HCT116 (cell line): ENCODE measurements at regions of chr12 and their contacts with region 1.

Region 1: GRCh38 chr12:49503674-49504180 is 35.1 kb upstream of the KCNH3 start:
- DNase-seq: peak; percentile 98
- ATAC-seq: peak; percentile 66
- H3K4me3 ChIP-seq: peak overlapping the region in 1 of 2 experiments; percentile 46; a peak in 2 of 4 replicates
- H3K27ac ChIP-seq: peak overlapping the region; percentile 95
- H3K4me1 ChIP-seq: peaks cover 73 to 79% of the 10 kb centered on the region in 2 experiments
- H3K27me3 ChIP-seq: no peaks in the 10 kb centered on the region
- CTCF ChIP-seq: no peak
- POLR2A ChIP-seq: no peak
- RAD21 ChIP-seq: peak; percentile 21; the same call in 1 of the 2 replicates

Region 2: GRCh38 chr12:49366652-49367380 is 136.9 kb before region 1 on chr12:
- CTCF ChIA-PET with region 1: interaction called, 4 read pairs
- POLR2A ChIA-PET with region 1: interaction called, 16 read pairs
- RAD21 ChIA-PET with region 1: no interaction called
- intact Hi-C with region 1: no loop called
- DNase-seq: peak; percentile 80
- ATAC-seq: peak; percentile 85
- H3K4me3 ChIP-seq: peak overlapping the region; percentile 65 to 71
- H3K27ac ChIP-seq: peak overlapping the region; percentile 99
- H3K4me1 ChIP-seq: peaks cover 38 to 52% of the 10 kb centered on the region in 2 experiments
- H3K27me3 ChIP-seq: no peaks in the 10 kb centered on the region
- CTCF ChIP-seq: 0 out of 6 replicates have a peak, but pooled peaks of 2 of the 3 experiments have one; percentile 11 to 12
- POLR2A ChIP-seq: peak; percentile 71
- RAD21 ChIP-seq: 0 out of 2 replicates have a peak, but pooled peaks have one; percentile 1

Region 3: DNA sequence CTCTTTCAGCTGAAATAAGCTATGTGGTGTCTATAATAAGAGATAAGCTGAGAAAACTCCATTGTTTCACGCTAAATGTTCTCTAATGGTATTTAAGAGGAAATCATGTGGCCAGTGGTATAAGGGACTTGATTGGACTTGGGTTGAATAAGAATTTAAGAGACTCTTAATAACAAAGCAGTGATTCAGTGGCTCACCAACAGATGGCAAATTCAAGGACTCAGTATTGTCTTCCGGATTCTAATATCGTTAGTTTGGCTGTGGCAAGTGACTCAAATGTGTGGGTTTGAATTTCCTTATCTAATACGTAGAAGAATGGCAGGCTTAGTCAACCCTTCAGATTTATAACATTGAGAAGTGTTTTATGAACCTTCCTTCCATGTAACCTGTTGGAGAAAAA is 14.0 kb before region 1 on chr12:
- CTCF ChIA-PET with region 1: interaction called, 4 read pairs
- POLR2A ChIA-PET with region 1: interaction called, 17 read pairs
- RAD21 ChIA-PET with region 1: no interaction called
- intact Hi-C with region 1: no loop called
- DNase-seq: peak; percentile 70
- ATAC-seq: peak; percentile 48
- H3K4me3 ChIP-seq: 0 out of 4 replicates have a peak overlapping the region, but pooled peaks of 1 of the 2 experiments have one; percentile 1
- H3K27ac ChIP-seq: peak overlapping the region; percentile 87
- H3K4me1 ChIP-seq: peaks cover 64 to 67% of the 10 kb centered on the region in 2 experiments
- H3K27me3 ChIP-seq: no peaks in the 10 kb centered on the region
- CTCF ChIP-seq: no peak
- POLR2A ChIP-seq: no peak
- RAD21 ChIP-seq: peak; percentile 28; the same call in 1 of the 2 replicates

Region 4: GRCh38 chr12:49609746-49610089 is 106.0 kb after region 1 on chr12:
- CTCF ChIA-PET with region 1: no interaction called
- POLR2A ChIA-PET with region 1: no interaction called
- RAD21 ChIA-PET with region 1: no interaction called
- intact Hi-C with region 1: no loop called
- DNase-seq: no peak
- ATAC-seq: peak; percentile 90
- H3K4me3 ChIP-seq: no peak overlapping the region
- H3K27ac ChIP-seq: no peak overlapping the region
- H3K4me1 ChIP-seq: no peaks in the 10 kb centered on the region
- H3K27me3 ChIP-seq: no peaks in the 10 kb centered on the region
- CTCF ChIP-seq: peak; percentile 19 to 24 (median 22); a peak in 1 of 6 replicates
- POLR2A ChIP-seq: no peak
- RAD21 ChIP-seq: no peak; the same call in 1 of the 2 replicates